Thyroid gland (tissue), 4 donors: ENCODE measurements at regions of chr1 and their contacts with region 1.

Region 1: DNA sequence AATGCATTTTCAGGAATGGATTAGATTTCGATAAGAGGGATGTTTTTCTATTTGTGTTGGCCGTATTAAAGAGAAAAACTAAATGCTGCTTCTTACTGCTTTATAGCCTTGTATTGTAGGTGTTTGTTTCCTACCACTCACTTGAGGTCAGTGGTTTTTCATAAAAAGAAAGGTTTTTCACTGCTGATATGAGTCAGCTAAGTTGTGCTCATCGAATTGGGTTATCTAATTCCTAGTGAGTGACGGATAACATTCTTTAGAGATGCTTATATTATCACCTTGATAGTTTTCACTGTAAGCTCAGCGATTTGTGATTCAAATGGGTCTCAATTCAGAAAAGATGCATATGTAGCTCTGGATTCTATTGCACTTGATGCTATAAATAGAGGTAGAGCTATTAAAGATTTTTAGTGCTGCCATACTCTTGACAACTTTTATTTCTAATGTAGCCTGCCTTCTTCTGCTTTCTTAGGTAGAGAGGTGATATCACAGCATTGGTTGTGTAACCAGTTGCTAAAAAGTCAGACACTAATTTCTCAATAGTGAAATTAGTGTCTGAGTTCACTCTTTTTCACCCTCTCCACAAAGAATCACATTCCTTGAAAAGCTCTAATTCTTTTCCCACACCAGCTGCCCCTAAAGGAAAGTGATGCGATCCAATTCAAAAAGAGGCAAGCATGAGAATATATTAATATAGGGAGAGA is 180.0 kb downstream of the RASAL2 start:
- DNase-seq: no peak
- H3K4me3 ChIP-seq: no peak overlapping the region
- H3K27ac ChIP-seq: no peak overlapping the region
- H3K4me1 ChIP-seq: peaks cover 0 to 4% of the 10 kb centered on the region in 2 donors
- H3K27me3 ChIP-seq: no peaks in the 10 kb centered on the region
- CTCF ChIP-seq: no peak
- POLR2A ChIP-seq: no peak

Region 2: GRCh38 chr1:178031856-178032320 is 242.0 kb before region 1 on chr1:
- intact Hi-C with region 1: loop called (anchors 10 kb)
- DNase-seq: peak; percentile 95 to 96
- H3K4me3 ChIP-seq: no peak overlapping the region
- H3K27ac ChIP-seq: peak overlapping the region in 2 of 3 donors; percentile 81 to 89
- H3K4me1 ChIP-seq: peaks cover 42 to 68% of the 10 kb centered on the region in 2 donors
- H3K27me3 ChIP-seq: no peaks in the 10 kb centered on the region
- CTCF ChIP-seq: peak; percentile 51 to 87 (median 74)
- POLR2A ChIP-seq: no peak